ENCODE measurements at regions of chr2 and their contacts with region 1.

Region 1: DNA sequence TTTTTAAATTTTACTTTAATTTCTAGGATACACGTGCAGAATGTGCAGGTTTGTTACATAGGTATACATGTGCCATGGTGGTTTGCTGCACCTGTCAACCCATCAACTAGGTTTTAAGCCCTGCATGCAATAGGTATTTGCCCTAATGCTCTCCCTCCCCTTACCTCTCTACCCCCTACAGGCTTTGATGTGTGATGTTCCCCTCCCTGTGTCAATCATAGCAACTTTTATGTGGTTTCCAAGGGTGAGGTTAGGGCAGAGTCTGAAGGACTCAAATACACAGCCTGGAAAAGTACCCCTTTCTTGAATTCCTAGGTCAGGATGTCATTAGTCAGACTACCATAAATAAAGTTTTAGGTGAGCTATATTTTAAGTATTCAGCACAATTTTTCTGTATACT is 31.1 kb upstream of the MYT1L start:
- DNase-seq: no peak
- ATAC-seq: no peak
- H3K4me3 ChIP-seq: no peak overlapping the region
- H3K27ac ChIP-seq: no peak overlapping the region
- H3K4me1 ChIP-seq: no peaks in the 10 kb centered on the region
- H3K27me3 ChIP-seq: no peaks in the 10 kb centered on the region
- CTCF ChIP-seq: no peak
- POLR2A ChIP-seq: no peak
- RAD21 ChIP-seq: no peak

Region 2: GRCh38 chr2:2280483-2280882 is 81.7 kb before region 1 on chr2:
- CTCF ChIA-PET with region 1: no interaction called
- POLR2A ChIA-PET with region 1: no interaction called
- dilution Hi-C with region 1: no loop called
- in situ Hi-C with region 1: no loop called
- intact Hi-C with region 1: no loop called
- DNase-seq: no peak
- ATAC-seq: no peak
- H3K4me3 ChIP-seq: no peak overlapping the region
- H3K27ac ChIP-seq: no peak overlapping the region
- H3K4me1 ChIP-seq: no peaks in the 10 kb centered on the region
- H3K27me3 ChIP-seq: no peaks in the 10 kb centered on the region
- CTCF ChIP-seq: no peak
- POLR2A ChIP-seq: no peak
- RAD21 ChIP-seq: no peak

Region 3: DNA sequence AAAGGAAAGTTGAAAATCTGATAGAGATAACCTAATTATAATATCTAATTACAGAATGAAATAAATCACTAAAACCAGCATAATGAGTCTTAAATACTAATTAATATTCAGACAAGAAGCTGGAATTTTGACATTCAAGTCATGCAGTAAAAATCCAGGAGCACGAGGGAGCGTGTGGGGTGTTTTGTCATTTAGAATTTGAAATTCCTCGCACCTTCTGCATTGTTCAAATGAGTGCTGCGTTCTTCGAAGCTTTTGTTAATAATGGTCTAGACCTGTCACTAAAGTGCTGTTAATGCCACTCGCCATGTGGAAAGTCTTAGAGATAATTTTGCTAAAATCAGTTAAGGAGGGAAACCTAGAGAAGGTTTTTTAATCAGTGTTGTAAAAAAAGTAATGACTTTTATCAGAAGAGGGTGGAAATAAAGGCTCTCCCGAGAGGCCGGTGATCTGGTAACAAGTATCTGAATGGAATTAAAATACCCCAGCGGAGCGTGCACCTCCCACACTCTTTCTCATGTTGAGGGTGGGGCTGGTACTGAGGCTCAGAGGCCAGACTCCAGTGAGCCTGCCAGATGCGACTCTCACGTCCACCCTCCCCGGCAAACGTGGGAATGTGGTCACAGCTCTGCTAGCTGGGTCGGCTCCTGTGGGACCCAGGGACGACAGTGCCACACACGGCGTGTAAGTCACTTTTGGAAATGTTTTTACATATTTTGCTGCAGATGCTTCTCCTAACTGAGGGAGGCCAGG is 38.3 kb after region 1 on chr2:
- CTCF ChIA-PET with region 1: no interaction called
- POLR2A ChIA-PET with region 1: no interaction called
- dilution Hi-C with region 1: no loop called
- in situ Hi-C with region 1: no loop called
- intact Hi-C with region 1: no loop called
- DNase-seq: no peak
- ATAC-seq: no peak
- H3K4me3 ChIP-seq: no peak overlapping the region
- H3K27ac ChIP-seq: no peak overlapping the region
- H3K4me1 ChIP-seq: no peaks in the 10 kb centered on the region
- H3K27me3 ChIP-seq: no peaks in the 10 kb centered on the region
- CTCF ChIP-seq: no peak
- POLR2A ChIP-seq: no peak
- RAD21 ChIP-seq: no peak

Region 4: GRCh38 chr2:2590841-2591541 is 228.8 kb after region 1 on chr2:
- CTCF ChIA-PET with region 1: no interaction called
- POLR2A ChIA-PET with region 1: no interaction called
- dilution Hi-C with region 1: no loop called
- in situ Hi-C with region 1: no loop called
- intact Hi-C with region 1: no loop called
- DNase-seq: no peak
- ATAC-seq: no peak
- H3K4me3 ChIP-seq: no peak overlapping the region
- H3K27ac ChIP-seq: no peak overlapping the region
- H3K4me1 ChIP-seq: no peaks in the 10 kb centered on the region
- H3K27me3 ChIP-seq: no peaks in the 10 kb centered on the region
- CTCF ChIP-seq: no peak
- POLR2A ChIP-seq: no peak
- RAD21 ChIP-seq: no peak

Region 5: GRCh38 chr2:2822143-2822542 is 460.0 kb after region 1 on chr2:
- CTCF ChIA-PET with region 1: no interaction called
- POLR2A ChIA-PET with region 1: no interaction called
- dilution Hi-C with region 1: no loop called
- in situ Hi-C with region 1: no loop called
- intact Hi-C with region 1: no loop called
- DNase-seq: no peak
- ATAC-seq: no peak
- H3K4me3 ChIP-seq: no peak overlapping the region
- H3K27ac ChIP-seq: no peak overlapping the region
- H3K4me1 ChIP-seq: no peaks in the 10 kb centered on the region
- H3K27me3 ChIP-seq: no peaks in the 10 kb centered on the region
- CTCF ChIP-seq: no peak
- POLR2A ChIP-seq: no peak
- RAD21 ChIP-seq: no peak

Region 6: DNA sequence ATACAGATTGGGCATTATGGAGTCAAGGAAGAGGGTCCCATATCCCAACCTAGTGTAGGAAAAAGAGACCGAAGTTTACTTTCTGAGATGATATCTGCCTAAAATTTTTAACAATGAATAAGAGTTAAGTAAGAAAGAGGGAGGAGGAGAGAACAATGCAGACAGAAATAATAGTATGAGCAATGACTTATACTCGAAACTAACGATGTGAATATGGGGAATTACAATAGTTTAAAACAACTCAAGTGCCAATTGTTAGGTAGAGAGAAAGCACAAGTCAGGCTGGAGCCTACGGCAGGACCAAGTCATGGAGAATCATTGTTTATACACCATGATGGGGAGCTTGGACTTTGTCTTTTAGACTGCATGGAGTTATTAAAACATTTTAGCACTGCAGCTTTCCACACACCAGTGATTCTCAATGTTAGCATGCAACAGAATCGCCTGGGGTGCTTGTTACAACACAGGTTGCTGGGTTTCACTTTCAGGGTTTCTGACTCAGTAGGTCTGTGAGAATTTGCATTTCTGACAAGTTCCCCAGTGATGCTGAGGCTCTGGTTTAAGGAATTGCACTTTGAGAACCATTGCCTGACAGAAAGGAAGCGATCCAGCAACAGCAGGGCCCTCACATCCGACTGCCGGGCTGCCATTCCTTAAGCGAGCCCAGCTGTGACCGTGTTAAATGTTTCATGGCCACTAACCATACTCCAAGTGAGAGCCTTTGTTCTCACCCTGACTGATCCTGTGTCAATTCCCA is 1852.4 kb after region 1 on chr2:
- CTCF ChIA-PET with region 1: no interaction called
- POLR2A ChIA-PET with region 1: no interaction called
- dilution Hi-C with region 1: no loop called
- in situ Hi-C with region 1: no loop called
- intact Hi-C with region 1: loop called (anchors 10 kb)
- DNase-seq: no peak
- ATAC-seq: no peak
- H3K4me3 ChIP-seq: no peak overlapping the region
- H3K27ac ChIP-seq: no peak overlapping the region
- H3K4me1 ChIP-seq: no peaks in the 10 kb centered on the region
- H3K27me3 ChIP-seq: no peaks in the 10 kb centered on the region
- CTCF ChIP-seq: no peak
- POLR2A ChIP-seq: no peak
- RAD21 ChIP-seq: no peak

Measured in IMR-90 (cell line).